Mammary epithelial cell (primary cell): ENCODE measurements at regions of chr14 and their contacts with region 1.

Region 1: DNA sequence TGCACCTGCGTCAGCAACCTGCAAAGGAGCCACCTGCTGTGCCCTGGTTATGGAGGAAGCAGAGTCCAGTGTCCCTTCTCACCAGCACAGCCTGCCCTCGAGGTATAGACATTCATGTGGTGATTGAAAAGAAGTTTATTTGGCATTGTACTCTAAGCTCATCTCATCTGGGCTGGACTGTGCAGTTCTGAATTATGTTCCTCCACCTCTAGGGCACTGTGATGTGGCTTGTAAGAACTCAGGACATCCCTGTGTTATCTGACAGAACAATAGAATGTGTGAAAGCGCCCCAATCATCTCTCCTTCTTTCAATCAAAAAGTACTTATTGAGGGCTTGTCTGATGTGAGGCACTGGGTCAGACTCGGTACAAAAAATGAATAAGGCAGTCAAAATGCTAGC is 140.1 kb downstream of the DHRS2 start:
- DNase-seq: no peak
- H3K4me3 ChIP-seq: no peak overlapping the region
- H3K27ac ChIP-seq: no peak overlapping the region
- H3K4me1 ChIP-seq: no peaks in the 10 kb centered on the region
- H3K27me3 ChIP-seq: peaks cover 8% of the 10 kb centered on the region
- CTCF ChIP-seq: no peak

Region 2: GRCh38 chr14:23877538-23878180 is 101.4 kb after region 1 on chr14:
- CTCF ChIA-PET with region 1: no interaction called
- dilution Hi-C with region 1: loop called (anchors 5 kb)
- in situ Hi-C with region 1: no loop called
- intact Hi-C with region 1: no loop called
- DNase-seq: no peak
- H3K4me3 ChIP-seq: no peak overlapping the region
- H3K27ac ChIP-seq: no peak overlapping the region
- H3K4me1 ChIP-seq: no peaks in the 10 kb centered on the region
- H3K27me3 ChIP-seq: no peaks in the 10 kb centered on the region
- CTCF ChIP-seq: no peak

Region 3: GRCh38 chr14:23910101-23910875 is 134.0 kb after region 1 on chr14:
- CTCF ChIA-PET with region 1: interaction called, 23 read pairs
- dilution Hi-C with region 1: no loop called
- in situ Hi-C with region 1: no loop called
- intact Hi-C with region 1: no loop called
- DNase-seq: peak; percentile 53
- H3K4me3 ChIP-seq: no peak overlapping the region
- H3K27ac ChIP-seq: no peak overlapping the region
- H3K4me1 ChIP-seq: no peaks in the 10 kb centered on the region
- H3K27me3 ChIP-seq: no peaks in the 10 kb centered on the region
- CTCF ChIP-seq: peak; percentile 90 to 92

Region 4: GRCh38 chr14:23929822-23930294 is 153.6 kb after region 1 on chr14:
- CTCF ChIA-PET with region 1: no interaction called
- dilution Hi-C with region 1: no loop called
- in situ Hi-C with region 1: no loop called
- intact Hi-C with region 1: no loop called
- DNase-seq: peak; percentile 39
- H3K4me3 ChIP-seq: no peak overlapping the region
- H3K27ac ChIP-seq: no peak overlapping the region
- H3K4me1 ChIP-seq: peaks cover 3% of the 10 kb centered on the region
- H3K27me3 ChIP-seq: no peaks in the 10 kb centered on the region
- CTCF ChIP-seq: peak; percentile 92 to 93